ENCODE measurements at regions of chr3 and their contacts with region 1.

Region 1: DNA sequence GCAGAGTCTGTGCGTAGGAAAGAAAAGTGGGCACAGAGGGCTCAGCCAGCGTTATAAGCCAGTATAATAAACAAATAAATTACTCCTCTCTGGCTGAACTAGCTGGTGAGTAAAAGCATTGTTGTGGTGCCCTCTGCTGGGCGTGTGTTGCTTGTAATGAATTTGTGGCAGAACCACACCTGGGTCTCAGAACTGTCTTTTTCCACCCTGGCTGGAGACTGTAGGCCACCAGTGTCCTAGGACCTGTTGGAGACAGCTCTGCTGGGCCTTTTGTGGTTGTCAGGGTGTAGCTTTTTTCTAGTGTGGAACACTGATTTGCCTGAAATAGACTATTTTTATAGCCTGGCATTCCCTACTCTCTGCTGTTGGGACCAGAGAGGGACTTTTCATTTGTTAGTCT is 130.5 kb upstream of the EIF1B start:
- DNase-seq: peak; percentile 44
- H3K4me3 ChIP-seq: no peak overlapping the region
- H3K27ac ChIP-seq: no peak overlapping the region
- H3K4me1 ChIP-seq: no peaks in the 10 kb centered on the region
- H3K27me3 ChIP-seq: no peaks in the 10 kb centered on the region
- CTCF ChIP-seq: peak; percentile 61 to 76

Region 2: DNA sequence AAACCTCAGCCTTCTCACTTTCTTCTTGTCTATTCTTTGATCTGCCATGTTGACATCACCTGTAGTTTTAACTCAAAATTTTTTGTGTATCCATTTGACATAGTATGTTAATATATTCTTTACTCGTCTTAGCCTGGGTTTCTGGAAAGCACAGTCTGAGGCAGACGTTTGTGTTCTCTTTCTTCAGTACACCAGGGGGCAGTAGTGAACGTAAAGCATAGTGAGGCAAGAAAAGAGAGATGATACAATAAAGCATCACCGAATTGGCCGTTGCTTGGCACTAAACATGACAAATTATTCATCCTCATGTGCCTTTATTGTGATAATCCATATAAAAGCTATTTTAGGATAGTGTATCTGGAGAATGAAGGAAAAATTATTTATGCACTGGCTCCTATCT is 510.6 kb before region 1 on chr3:
- CTCF ChIA-PET with region 1: no interaction called
- dilution Hi-C with region 1: no loop called
- in situ Hi-C with region 1: no loop called
- intact Hi-C with region 1: loop called (anchors 2 kb)
- DNase-seq: peak; percentile 43
- H3K4me3 ChIP-seq: no peak overlapping the region
- H3K27ac ChIP-seq: no peak overlapping the region
- H3K4me1 ChIP-seq: no peaks in the 10 kb centered on the region
- H3K27me3 ChIP-seq: no peaks in the 10 kb centered on the region
- CTCF ChIP-seq: peak; percentile 73 to 83

Region 3: GRCh38 chr3:39724233-39724846 is 454.7 kb before region 1 on chr3:
- CTCF ChIA-PET with region 1: no interaction called
- dilution Hi-C with region 1: no loop called
- in situ Hi-C with region 1: loop called (anchors 25 kb)
- intact Hi-C with region 1: loop called (anchors 1 kb)
- DNase-seq: no peak
- H3K4me3 ChIP-seq: no peak overlapping the region
- H3K27ac ChIP-seq: no peak overlapping the region
- H3K4me1 ChIP-seq: no peaks in the 10 kb centered on the region
- H3K27me3 ChIP-seq: no peaks in the 10 kb centered on the region
- CTCF ChIP-seq: peak in 1 of 2 donors; percentile 24

Region 4: DNA sequence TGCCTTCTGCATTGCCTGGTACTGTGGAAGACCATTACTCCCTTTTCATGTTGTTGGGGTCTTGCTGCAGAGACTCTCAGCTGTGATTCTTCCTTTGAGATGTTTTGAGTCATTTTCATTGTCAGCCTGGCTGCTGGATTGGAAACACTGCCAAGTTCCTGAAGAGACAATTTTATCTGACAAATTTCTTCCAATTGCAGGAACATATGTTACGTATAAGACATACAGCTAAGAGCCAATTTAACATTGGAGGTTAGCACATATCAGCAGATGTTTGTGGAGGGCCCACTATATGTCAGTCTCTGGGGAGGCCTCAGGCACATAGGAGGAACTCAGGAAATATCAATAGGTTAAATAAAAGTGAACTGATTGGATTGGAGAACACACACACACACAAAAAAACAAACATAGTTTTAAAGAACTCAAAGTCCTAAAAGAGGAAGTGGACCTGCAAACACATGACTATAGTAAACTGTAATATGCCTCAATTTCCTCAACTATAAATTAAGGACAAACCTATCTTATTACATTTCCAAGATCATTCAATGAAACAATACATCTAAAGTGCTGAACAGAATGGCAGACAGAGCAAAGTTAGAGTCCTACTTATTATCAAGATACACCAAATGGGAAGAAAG is 197.3 kb before region 1 on chr3:
- CTCF ChIA-PET with region 1: no interaction called
- dilution Hi-C with region 1: no loop called
- in situ Hi-C with region 1: loop called in 1 of 2 experiments (anchors 10 kb)
- intact Hi-C with region 1: no loop called
- DNase-seq: no peak
- H3K4me3 ChIP-seq: no peak overlapping the region
- H3K27ac ChIP-seq: no peak overlapping the region
- H3K4me1 ChIP-seq: no peaks in the 10 kb centered on the region
- H3K27me3 ChIP-seq: no peaks in the 10 kb centered on the region
- CTCF ChIP-seq: no peak

Region 5: GRCh38 chr3:40009991-40010390 is 169.0 kb before region 1 on chr3:
- CTCF ChIA-PET with region 1: no interaction called
- dilution Hi-C with region 1: no loop called
- in situ Hi-C with region 1: no loop called
- intact Hi-C with region 1: loop called (anchors 5 kb)
- DNase-seq: no peak
- H3K4me3 ChIP-seq: no peak overlapping the region
- H3K27ac ChIP-seq: no peak overlapping the region
- H3K4me1 ChIP-seq: no peaks in the 10 kb centered on the region
- H3K27me3 ChIP-seq: no peaks in the 10 kb centered on the region
- CTCF ChIP-seq: no peak

Region 6: DNA sequence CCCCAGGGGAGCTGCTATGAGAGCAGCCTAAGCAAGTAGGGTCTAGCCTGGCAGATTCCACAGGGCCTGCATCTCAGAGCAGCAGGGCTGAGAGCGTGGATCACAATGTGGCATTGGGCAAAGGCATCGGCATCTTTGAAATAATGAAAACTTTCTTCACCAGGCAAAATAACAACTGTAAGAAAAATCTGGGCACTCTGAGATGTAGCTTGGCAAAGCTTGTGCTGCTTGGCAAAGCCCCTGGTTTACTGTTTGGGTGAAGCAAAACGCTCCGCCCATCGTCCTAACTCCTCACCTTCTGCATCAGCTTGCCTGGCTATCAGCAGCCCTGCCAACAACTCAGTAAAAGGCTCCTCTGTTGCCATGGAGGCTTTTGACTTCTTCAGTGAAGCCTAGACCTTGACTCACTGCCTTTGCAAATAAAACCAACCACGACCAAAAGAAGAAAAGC is 82.3 kb before region 1 on chr3:
- CTCF ChIA-PET with region 1: no interaction called
- dilution Hi-C with region 1: no loop called
- in situ Hi-C with region 1: no loop called
- intact Hi-C with region 1: loop called (anchors 5 kb)
- DNase-seq: peak; percentile 78
- H3K4me3 ChIP-seq: no peak overlapping the region
- H3K27ac ChIP-seq: peak overlapping the region; percentile 88
- H3K4me1 ChIP-seq: peaks cover 32% of the 10 kb centered on the region
- H3K27me3 ChIP-seq: no peaks in the 10 kb centered on the region
- CTCF ChIP-seq: no peak

Measured in mammary epithelial cell (primary cell).